Colonic mucosa (tissue), 4 donors: ENCODE measurements at regions of chrX and their contacts with region 1.

Region 1: DNA sequence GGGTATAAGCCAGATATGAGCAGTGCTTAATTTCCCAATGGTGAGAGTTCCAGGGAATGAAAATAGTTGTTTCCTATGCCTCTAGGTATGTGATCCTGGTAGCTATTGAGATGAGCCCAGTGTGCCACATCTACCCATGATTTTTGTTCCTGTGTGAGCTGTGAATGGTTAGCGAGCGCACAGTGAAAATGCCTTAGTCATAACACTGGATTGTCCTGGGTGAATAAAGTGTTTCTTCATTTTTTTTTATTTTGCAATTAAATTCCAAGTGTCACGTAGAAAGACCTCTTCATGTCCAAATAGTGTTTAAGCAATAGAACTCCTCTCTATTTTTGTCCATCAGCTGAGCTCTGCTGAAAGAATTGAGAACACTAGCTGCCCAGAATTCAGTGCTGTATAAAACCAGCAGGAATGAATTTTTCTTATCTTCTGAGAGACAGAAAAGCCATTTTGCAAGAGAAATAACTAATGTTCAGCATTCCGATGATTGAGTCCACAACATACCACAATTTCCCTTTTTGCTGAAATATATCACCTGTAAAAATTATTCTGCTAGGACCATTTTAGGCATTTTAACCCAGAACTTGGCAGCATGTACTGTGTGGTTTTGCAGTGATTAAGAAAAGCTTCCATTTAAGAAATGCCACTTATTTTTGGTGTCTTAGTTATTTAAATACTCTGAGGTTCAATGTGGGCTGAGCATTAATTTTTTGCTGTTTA is 5.6 kb downstream of the MAOA start:
- DNase-seq: no peak
- H3K4me3 ChIP-seq: no peak overlapping the region
- H3K27ac ChIP-seq: no peak overlapping the region
- H3K4me1 ChIP-seq: no peaks in the 10 kb centered on the region
- H3K27me3 ChIP-seq: no peaks in the 10 kb centered on the region
- CTCF ChIP-seq: no peak

Region 2: DNA sequence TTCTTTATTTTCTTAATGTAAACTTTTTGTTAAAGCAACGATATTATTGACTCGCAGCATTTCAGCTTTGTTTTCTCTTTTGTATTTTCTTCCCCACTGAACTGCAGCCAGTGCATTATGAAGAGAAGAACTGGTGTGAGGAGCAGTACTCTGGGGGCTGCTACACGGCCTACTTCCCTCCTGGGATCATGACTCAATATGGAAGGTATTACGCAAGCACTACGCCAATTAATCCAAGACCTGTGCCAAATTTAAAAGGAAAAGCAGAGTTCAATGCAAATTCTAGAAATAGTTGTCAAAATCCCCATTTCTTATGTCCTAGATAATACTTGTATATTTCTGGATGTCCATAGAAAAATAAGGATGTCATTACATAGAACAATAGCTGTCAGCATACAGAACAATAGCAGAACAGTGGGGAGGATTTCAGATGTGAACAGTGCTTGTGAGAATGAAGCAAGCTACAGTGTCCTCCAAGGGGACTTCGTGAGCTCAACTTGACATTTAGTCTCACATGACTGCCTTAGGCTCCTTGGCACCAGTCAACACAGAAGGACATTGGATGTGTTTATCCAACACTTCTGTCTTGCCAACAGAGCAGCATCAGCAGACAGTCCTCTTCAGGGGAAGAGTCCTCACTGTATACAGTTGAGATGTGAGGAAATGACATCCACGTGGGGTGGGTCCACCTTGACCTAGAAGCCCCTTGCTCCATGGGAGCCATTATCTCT is 80.3 kb after region 1 on chrX:
- intact Hi-C with region 1: loop called (anchors 10 kb)
- DNase-seq: no peak
- H3K4me3 ChIP-seq: no peak overlapping the region
- H3K27ac ChIP-seq: no peak overlapping the region
- H3K4me1 ChIP-seq: no peaks in the 10 kb centered on the region
- H3K27me3 ChIP-seq: no peaks in the 10 kb centered on the region
- CTCF ChIP-seq: no peak

Region 3: GRCh38 chrX:43785930-43786591 is 124.4 kb after region 1 on chrX:
- intact Hi-C with region 1: no loop called
- DNase-seq: no peak
- H3K4me3 ChIP-seq: no peak overlapping the region
- H3K27ac ChIP-seq: peak overlapping the region; percentile 27
- H3K4me1 ChIP-seq: no peaks in the 10 kb centered on the region
- H3K27me3 ChIP-seq: no peaks in the 10 kb centered on the region
- CTCF ChIP-seq: no peak